ENCODE measurements at regions of chr22 and their contacts with region 1.

Region 1: DNA sequence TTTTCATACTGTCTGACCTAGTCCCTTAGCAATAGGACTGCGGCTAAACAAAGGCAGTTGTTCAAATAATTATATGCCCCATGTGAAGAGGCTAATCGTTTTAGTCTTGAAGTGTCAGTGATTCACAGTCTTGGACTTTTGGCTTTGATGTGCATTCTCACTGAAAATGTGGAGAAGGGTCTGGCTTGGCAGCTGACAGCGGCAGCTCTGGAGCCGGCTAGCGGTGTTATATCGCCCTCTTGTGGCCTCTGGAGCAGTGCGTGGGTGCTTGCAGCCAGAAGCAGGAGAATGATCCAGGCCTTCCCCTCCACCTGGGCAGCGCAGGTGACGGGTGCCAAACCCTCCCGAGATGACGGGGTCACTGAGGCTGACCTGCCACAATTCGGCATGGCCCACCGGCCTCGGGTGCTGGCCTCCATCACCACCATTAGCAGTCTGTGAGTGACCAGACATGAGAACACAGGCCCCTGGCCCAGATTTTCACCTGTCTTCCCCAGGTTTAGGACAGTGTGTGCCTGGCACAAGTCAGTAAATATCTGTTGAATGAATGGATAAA is 90.3 kb upstream of the PITPNB start:
- DNase-seq: peak; percentile 74
- H3K4me3 ChIP-seq: no peak overlapping the region
- H3K27ac ChIP-seq: no peak overlapping the region
- H3K4me1 ChIP-seq: no peaks in the 10 kb centered on the region
- H3K27me3 ChIP-seq: no peaks in the 10 kb centered on the region
- CTCF ChIP-seq: peak; percentile 95

Region 2: GRCh38 chr22:27885977-27886842 is 123.1 kb before region 1 on chr22:
- intact Hi-C with region 1: loop called (anchors 2 kb)
- DNase-seq: peak; percentile 52
- H3K4me3 ChIP-seq: no peak overlapping the region
- H3K27ac ChIP-seq: no peak overlapping the region
- H3K4me1 ChIP-seq: no peaks in the 10 kb centered on the region
- H3K27me3 ChIP-seq: no peaks in the 10 kb centered on the region
- CTCF ChIP-seq: peak; percentile 93

Region 3: DNA sequence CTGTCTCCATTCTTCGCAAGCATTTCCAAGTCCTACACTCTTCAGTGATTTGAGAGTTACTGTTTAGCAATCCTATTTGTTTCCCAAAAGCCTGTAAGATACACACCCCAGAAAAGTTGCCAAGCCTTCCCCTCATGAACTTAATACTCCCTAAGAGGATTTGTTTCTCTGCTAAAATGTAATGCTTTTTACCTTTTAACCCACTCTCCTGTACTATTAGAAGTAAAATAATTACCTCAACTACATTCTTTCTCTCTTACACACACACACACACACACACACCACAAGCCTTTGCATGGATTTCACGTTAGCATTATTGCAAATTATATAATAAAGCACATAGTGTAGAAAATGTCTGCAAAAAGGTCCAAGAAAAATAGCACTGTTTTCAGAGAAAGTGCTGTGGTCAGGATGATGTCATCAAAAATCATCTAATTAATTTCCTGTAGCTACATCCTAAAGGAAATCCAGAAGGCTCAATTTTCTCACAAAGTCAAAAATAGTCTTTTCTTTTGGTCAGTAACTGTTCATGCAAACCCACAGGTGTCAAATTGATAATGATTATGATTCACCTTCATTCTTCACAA is 273.8 kb after region 1 on chr22:
- intact Hi-C with region 1: no loop called
- DNase-seq: no peak
- H3K4me3 ChIP-seq: no peak overlapping the region
- H3K27ac ChIP-seq: no peak overlapping the region
- H3K4me1 ChIP-seq: no peaks in the 10 kb centered on the region
- H3K27me3 ChIP-seq: no peaks in the 10 kb centered on the region
- CTCF ChIP-seq: no peak

Measured in colonic mucosa (tissue), 4 donors.